ENCODE measurements at regions of chr12 and their contacts with region 1.

Region 1: GRCh38 chr12:16359512-16360491 is 12.4 kb downstream of the MGST1 start:
- DNase-seq: peak; percentile 64 to 81 (median 78)
- ATAC-seq: peak; percentile 83
- H3K4me3 ChIP-seq: no peak overlapping the region
- H3K4me1 ChIP-seq: no peaks in the 10 kb centered on the region
- CTCF ChIP-seq: peak; percentile 47

Region 2: GRCh38 chr12:16165506-16165905 is 194.3 kb before region 1 on chr12:
- intact Hi-C with region 1: loop called in 1 of 2 experiments (anchors 5 kb)
- DNase-seq: peak in 1 of 3 donors; percentile 64
- ATAC-seq: peak; percentile 69
- H3K4me3 ChIP-seq: no peak overlapping the region
- H3K4me1 ChIP-seq: no peaks in the 10 kb centered on the region
- CTCF ChIP-seq: no peak

Region 3: DNA sequence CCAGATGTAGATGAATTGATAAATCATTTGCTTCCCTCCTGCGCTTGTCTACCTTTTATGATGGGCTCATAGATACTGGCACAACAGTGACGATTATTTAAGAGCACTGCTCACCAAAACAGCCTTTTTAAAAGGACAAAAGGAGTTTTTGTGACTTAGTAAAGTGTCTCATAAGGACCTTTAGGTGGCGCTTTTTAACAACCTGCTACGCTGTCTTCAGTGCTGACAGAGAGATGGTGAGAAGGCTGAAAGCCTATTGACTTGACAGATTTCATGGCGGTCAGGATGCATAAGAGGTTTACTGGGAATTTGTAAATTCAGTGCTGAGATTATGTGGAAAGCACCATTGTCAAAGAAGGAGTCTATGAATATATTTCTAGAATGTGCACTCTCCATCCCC is 170.0 kb before region 1 on chr12:
- intact Hi-C with region 1: loop called in 1 of 2 experiments (anchors 10 kb)
- DNase-seq: no peak
- ATAC-seq: peak; percentile 80
- H3K4me3 ChIP-seq: no peak overlapping the region
- H3K4me1 ChIP-seq: no peaks in the 10 kb centered on the region
- CTCF ChIP-seq: no peak

Region 4: DNA sequence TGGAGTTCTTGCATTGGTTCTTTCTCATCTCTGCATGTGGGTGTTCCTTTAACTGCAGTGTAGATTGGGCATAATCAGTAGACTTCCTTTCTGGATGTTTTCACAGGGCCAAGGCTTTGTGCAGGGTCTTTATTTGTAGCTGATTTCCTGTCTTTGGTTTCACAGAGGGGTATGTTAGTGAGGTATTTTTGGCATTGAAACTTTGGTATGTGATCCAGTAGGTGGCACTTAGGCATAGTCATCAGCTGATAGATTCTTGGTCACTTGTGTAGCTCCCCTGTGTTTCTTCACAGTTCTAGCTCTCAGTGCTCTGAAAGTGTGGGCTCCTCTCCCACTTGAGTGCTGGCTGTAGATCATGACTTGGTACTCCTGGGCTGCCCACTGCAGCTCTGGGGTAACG is 298.9 kb after region 1 on chr12:
- intact Hi-C with region 1: no loop called
- DNase-seq: no peak
- ATAC-seq: no peak
- H3K4me3 ChIP-seq: no peak overlapping the region
- H3K4me1 ChIP-seq: no peaks in the 10 kb centered on the region
- CTCF ChIP-seq: no peak

Measured in mucosa of descending colon (tissue), 3 donors.